GM12878 (cell line): ENCODE measurements at regions of chr5 and their contacts with region 1.

Region 1: GRCh38 chr5:179858586-179859427 is at the start of gene MRNIP:
- DNase-seq: peak; percentile 79
- ATAC-seq: peak; percentile 98
- H3K4me3 ChIP-seq: peak within 1 kb of the TSS; percentile 93
- H3K27ac ChIP-seq: peak within 1 kb of the TSS; percentile 73
- H3K4me1 ChIP-seq: peaks cover 4% of the 10 kb centered on the region; the same call in 1 of the 2 replicates
- H3K27me3 ChIP-seq: no peaks in the 10 kb centered on the region
- CTCF ChIP-seq: peak in 1 of 3 experiments; percentile 57; a peak in 2 of 6 replicates
- EP300 ChIP-seq: peak; percentile 7 to 16; a peak in 1 of 4 replicates
- POLR2A ChIP-seq: peak; percentile 83
- RAD21 ChIP-seq: peak; percentile 27; the same call in 1 of the 2 replicates
- polyA plus RNA-seq, gene MRNIP: 2.4 to 13.6 TPM

Region 2: GRCh38 chr5:179821581-179822432 is 37.0 kb before region 1 on chr5:
- CTCF ChIA-PET with region 1: interaction called, 4 read pairs
- POLR2A ChIA-PET with region 1: interaction called, 6 read pairs
- RAD21 ChIA-PET with region 1: interaction called, 5 read pairs
- SMC1A ChIA-PET with region 1: no interaction called
- in situ Hi-C with region 1: no loop called
- intact Hi-C with region 1: loop called (anchors 2 kb)
- DNase-seq: no peak
- ATAC-seq: peak; percentile 74
- H3K4me3 ChIP-seq: peak overlapping the region; percentile 93
- H3K27ac ChIP-seq: peak overlapping the region; percentile 96
- H3K4me1 ChIP-seq: peaks cover 35% of the 10 kb centered on the region
- H3K27me3 ChIP-seq: no peaks in the 10 kb centered on the region
- CTCF ChIP-seq: no peak
- EP300 ChIP-seq: no peak
- POLR2A ChIP-seq: peak; percentile 73
- RAD21 ChIP-seq: no peak

Region 3: DNA sequence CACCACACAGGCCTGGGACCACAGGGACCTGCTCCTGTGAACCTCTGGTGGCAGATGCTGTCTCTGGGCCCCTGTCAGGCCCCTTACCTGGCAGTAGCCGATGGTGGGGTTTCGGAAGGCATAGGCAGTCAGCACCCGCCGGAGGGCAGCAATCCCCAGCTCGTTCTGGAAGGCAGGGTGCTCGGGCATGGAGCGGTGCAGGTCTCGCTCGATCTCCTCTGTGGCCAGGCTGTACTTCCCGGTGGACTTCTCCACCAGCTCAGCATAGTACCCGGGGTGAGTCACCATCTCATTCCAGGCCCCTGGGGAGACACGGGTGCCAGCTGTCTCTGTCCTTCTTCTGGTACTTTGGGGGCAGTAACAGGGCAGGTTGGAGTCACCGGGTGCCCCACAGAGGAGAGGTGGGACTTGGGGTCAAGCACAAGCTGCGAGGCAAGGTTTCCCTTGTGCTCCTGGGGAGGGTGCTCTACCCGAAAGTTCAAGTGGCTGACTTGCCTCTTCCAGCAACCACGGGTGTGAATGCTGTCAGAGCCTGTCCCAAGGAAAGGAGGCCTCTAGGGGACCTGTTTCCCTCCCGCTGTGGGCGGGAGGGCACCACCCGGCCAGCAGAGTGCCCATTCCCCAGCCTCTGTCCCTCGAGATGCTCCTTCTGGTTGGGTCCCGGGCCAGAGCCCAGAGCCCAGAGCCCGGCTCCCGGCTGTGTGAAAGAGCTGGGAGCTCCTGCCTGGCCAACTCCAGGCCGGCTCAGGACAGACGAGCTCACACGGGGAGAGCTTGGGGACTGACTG is 19.6 kb after region 1 on chr5:
- CTCF ChIA-PET with region 1: no interaction called
- POLR2A ChIA-PET with region 1: no interaction called
- RAD21 ChIA-PET with region 1: no interaction called
- SMC1A ChIA-PET with region 1: no interaction called
- in situ Hi-C with region 1: no loop called
- intact Hi-C with region 1: no loop called
- DNase-seq: no peak
- ATAC-seq: no peak
- H3K4me3 ChIP-seq: no peak overlapping the region
- H3K27ac ChIP-seq: no peak overlapping the region
- H3K4me1 ChIP-seq: no peaks in the 10 kb centered on the region
- H3K27me3 ChIP-seq: no peaks in the 10 kb centered on the region
- CTCF ChIP-seq: no peak
- EP300 ChIP-seq: no peak
- POLR2A ChIP-seq: no peak
- RAD21 ChIP-seq: no peak

Region 4: DNA sequence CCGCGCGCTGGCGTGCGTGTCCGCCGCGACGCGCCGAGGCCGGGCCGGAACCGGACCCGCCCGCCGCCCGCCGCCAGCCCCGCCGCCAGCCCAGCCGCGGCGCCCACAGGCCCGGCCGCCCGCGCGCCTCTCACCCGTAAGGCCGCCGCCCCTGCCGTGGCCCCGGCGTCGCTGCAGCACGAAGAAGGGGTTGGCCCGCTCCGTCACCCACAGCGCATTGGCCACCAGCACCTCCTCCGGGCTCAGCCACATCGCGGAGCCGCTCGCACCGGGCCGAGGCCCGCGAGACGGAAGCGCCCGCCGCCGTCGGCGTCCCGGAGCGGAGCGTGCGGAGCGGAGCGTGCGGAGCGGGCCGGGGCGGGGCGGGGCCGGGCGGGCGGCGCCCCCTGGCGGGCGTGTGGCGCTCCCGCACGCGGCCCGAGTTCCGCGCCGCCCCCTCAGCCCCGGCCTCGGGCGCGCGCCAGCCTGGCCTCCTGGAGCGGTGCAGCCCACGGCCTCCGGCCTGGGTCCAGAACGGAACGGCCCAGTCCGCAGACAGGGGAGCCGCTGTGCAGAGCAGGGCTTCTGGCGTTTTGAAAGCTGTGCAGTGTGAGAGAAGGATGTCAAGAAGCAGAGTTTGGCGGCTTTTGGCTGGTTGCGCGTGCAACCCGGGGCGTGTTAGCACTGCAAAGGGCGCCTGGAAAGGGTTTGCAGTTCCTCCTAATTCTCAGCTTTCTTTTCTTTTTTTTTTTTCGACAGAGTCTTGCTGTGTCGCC is 48.9 kb after region 1 on chr5 and contains the start of gene TBC1D9B:
- CTCF ChIA-PET with region 1: no interaction called
- POLR2A ChIA-PET with region 1: no interaction called
- RAD21 ChIA-PET with region 1: no interaction called
- SMC1A ChIA-PET with region 1: interaction called, 4 read pairs
- in situ Hi-C with region 1: no loop called
- intact Hi-C with region 1: loop called (anchors 2 kb)
- DNase-seq: no peak
- ATAC-seq: peak; percentile 93
- H3K4me3 ChIP-seq: peak within 1 kb of the TSS; percentile 94
- H3K27ac ChIP-seq: peak within 1 kb of the TSS; percentile 56; the same call in 1 of the 2 replicates
- H3K4me1 ChIP-seq: peaks cover 12% of the 10 kb centered on the region
- H3K27me3 ChIP-seq: no peaks in the 10 kb centered on the region
- CTCF ChIP-seq: peak in 2 of 3 experiments; percentile 27 to 47; a peak in 2 of 6 replicates
- EP300 ChIP-seq: no peak
- POLR2A ChIP-seq: peak; percentile 85
- RAD21 ChIP-seq: 0 out of 2 replicates have a peak, but pooled peaks have one; percentile 13
- polyA plus RNA-seq, gene TBC1D9B: 4.0 to 8.3 TPM